T-cell (primary cell): ENCODE measurements at regions of chr10 and their contacts with region 1.

Region 1: GRCh38 chr10:32985781-32986350 is 27.8 kb upstream of the ITGB1 start:
- DNase-seq: no peak
- ATAC-seq: no peak
- H3K4me3 ChIP-seq: no peak overlapping the region
- H3K4me3 Mint-ChIP-seq: no peak overlapping the region
- H3K27ac ChIP-seq: no peak overlapping the region
- H3K27ac Mint-ChIP-seq: no peak overlapping the region
- H3K4me1 ChIP-seq: peaks cover 7 to 28% of the 10 kb centered on the region in 2 experiments
- H3K4me1 Mint-ChIP-seq: peaks cover 19 to 30% (median 26%) of the 10 kb centered on the region in 3 donors
- H3K27me3 ChIP-seq: no peaks in the 10 kb centered on the region
- H3K27me3 Mint-ChIP-seq: no peaks in the 10 kb centered on the region

Region 2: DNA sequence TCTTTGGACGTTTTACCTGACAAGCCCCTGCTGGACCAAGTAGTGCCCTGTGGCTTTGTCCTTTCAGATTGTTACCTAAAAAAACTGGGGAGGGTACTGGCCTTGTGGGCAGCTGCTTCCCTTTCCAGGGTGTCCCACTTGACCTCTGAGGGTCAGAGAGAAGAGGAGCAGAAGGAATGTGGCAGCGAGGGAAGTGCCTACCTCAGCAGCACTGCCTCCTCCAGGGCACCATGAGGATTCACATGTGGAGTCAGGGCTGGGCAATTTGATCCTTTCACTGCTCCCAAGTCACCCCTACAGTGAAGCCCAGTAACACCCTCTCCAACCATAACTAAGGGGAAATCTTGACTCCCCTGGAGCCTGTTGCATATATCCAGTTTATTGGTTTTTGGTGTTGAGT is 92.4 kb before region 1 on chr10:
- CTCF ChIA-PET with region 1: no interaction called
- POLR2A ChIA-PET with region 1: no interaction called
- DNase-seq: no peak
- ATAC-seq: no peak
- H3K4me3 ChIP-seq: no peak overlapping the region
- H3K4me3 Mint-ChIP-seq: no peak overlapping the region
- H3K27ac ChIP-seq: no peak overlapping the region
- H3K27ac Mint-ChIP-seq: no peak overlapping the region
- H3K4me1 ChIP-seq: no peaks in the 10 kb centered on the region
- H3K4me1 Mint-ChIP-seq: peaks cover 8 to 19% (median 10%) of the 10 kb centered on the region in 3 donors
- H3K27me3 ChIP-seq: no peaks in the 10 kb centered on the region
- H3K27me3 Mint-ChIP-seq: no peaks in the 10 kb centered on the region

Region 3: GRCh38 chr10:33155720-33156638 is 170.1 kb after region 1 on chr10:
- CTCF ChIA-PET with region 1: interaction called in 1 of 2 experiments, 3 read pairs
- POLR2A ChIA-PET with region 1: interaction called, 4 to 10 read pairs
- DNase-seq: peak in 22 of 35 experiments; percentile 11 to 80 (median 31)
- ATAC-seq: peak; percentile 59 to 83 (median 74)
- H3K4me3 ChIP-seq: no peak overlapping the region
- H3K4me3 Mint-ChIP-seq: peak overlapping the region in 1 of 3 donors; percentile 2
- H3K27ac ChIP-seq: no peak overlapping the region
- H3K27ac Mint-ChIP-seq: peak overlapping the region; percentile 59 to 79
- H3K4me1 ChIP-seq: peaks cover 21 to 41% of the 10 kb centered on the region in 2 experiments
- H3K4me1 Mint-ChIP-seq: peaks cover 43 to 53% (median 45%) of the 10 kb centered on the region in 3 donors
- H3K27me3 ChIP-seq: no peaks in the 10 kb centered on the region
- H3K27me3 Mint-ChIP-seq: no peaks in the 10 kb centered on the region